OCI-LY7 (cell line): ENCODE measurements at regions of chr7 and their contacts with region 1.

Region 1: GRCh38 chr7:134943764-134944400 is 42.4 kb upstream of the AGBL3 start:
- DNase-seq: peak; percentile 27
- H3K4me3 ChIP-seq: no peak overlapping the region
- H3K27ac ChIP-seq: no peak overlapping the region
- H3K4me1 ChIP-seq: no peaks in the 10 kb centered on the region
- CTCF ChIP-seq: peak; percentile 67

Region 2: GRCh38 chr7:134859783-134860182 is 84.1 kb before region 1 on chr7:
- CTCF ChIA-PET with region 1: no interaction called
- POLR2A ChIA-PET with region 1: no interaction called
- intact Hi-C with region 1: loop called (anchors 5 kb)
- DNase-seq: no peak
- H3K4me3 ChIP-seq: no peak overlapping the region
- H3K27ac ChIP-seq: no peak overlapping the region
- H3K4me1 ChIP-seq: peaks cover 3% of the 10 kb centered on the region
- CTCF ChIP-seq: no peak